Endothelial cell of umbilical vein (primary cell): ENCODE measurements at regions of chr5 and their contacts with region 1.

Region 1: DNA sequence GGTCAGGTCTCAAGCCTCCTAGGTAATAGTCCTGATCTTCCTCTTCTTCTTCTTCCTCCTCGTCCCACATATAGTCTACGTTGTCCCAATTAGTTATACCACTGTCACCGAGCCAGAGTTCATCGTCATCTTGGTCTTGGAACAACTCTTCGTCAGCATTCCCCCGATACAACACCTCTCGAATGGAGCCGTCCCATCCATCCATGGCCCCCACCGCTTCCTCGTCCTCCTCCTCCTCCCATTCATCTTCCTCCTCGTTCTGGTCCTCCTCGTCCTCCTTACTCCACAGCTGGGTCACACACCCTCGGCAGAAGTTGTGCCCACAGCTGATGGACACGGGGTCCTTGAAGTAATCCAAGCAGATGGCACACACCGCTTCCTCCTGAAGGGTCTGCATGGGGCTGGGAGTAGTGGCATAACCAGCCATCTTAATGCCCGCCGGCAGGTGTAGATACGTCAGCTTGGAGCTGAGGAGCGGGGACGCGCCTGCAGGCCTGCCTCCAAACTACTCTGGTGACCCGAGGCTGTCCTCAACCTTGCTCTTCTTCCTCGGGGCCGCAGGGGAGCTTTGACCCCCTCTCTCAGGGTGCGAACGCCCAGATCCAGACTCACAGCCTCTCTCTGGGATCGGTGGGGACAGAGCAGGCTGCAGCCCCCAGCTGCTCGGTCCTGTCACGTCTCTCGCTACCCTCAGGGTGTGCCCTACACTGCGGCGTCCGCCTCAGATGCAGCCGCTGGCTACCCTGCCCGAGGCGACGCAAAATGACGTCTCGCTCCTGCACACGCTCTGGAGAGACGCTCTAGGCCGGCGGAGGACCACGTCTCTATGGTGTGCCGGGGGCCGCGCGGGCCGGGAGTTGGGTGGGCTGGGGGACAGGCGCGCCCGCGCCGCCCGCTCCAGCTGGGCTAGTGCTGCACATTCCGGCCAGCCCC is at the start of gene TRIM52:
- DNase-seq: peak; percentile 92
- H3K4me3 ChIP-seq: peak within 1 kb of the TSS; percentile 23 to 83 (median 59)
- H3K27ac ChIP-seq: peak within 1 kb of the TSS; percentile 95
- H3K4me1 ChIP-seq: peaks cover 23% of the 10 kb centered on the region
- H3K27me3 ChIP-seq: no peaks in the 10 kb centered on the region
- CTCF ChIP-seq: no peak
- POLR2A ChIP-seq: peak; percentile 80
- total RNA-seq, gene TRIM52: 9.6 and 10.1 TPM in 2 replicates

Region 2: DNA sequence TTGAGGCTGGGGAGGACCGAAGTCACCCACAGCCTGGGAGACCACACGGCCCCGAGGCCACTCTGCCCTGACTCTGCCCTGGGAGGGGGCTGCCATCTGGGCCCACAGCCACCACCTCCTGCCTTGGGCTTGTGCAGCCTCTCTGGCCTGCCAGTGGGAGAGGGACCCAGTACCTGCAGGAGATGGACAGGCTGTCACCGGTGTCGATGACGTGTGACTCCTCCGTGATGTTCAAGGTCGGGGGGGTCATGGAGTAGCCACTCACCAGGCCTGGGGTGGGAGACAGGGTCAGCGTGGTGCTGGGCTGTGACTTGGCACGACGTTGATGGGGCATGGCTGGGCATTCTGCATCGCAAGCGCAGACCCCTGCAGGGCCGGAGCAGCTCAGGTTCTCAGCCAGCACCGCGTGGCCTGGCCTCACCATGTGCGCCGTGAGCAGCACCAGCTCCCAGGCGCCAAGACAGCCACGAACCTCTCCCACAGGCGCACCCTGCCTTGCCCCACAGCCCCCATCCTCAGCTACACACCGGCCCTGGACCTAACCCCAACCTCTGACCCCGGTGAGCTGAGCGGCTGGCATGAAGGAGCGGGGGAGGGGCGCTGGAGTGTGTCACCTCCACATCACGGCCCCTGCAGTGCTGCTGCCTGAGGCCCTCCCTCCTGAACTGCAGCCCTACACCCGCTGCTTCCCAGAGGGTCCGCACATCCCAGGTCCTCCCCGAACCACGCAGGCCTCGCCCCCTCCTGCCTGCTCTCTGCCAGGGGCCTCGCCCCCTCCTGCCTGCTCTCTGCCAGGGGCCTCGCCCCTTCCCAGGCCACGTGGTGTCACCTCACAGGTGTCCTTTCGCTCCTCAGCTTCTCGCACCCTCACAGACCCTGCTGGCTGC is 628.9 kb before region 1 on chr5:
- CTCF ChIA-PET with region 1: no interaction called
- POLR2A ChIA-PET with region 1: no interaction called
- dilution Hi-C with region 1: no loop called
- intact Hi-C with region 1: no loop called
- DNase-seq: no peak
- H3K4me3 ChIP-seq: no peak overlapping the region
- H3K27ac ChIP-seq: no peak overlapping the region
- H3K4me1 ChIP-seq: no peaks in the 10 kb centered on the region
- H3K27me3 ChIP-seq: no peaks in the 10 kb centered on the region
- CTCF ChIP-seq: no peak
- POLR2A ChIP-seq: no peak

Region 3: GRCh38 chr5:180802325-180803180 is 458.1 kb before region 1 on chr5 and contains the start of gene MGAT1:
- CTCF ChIA-PET with region 1: no interaction called
- POLR2A ChIA-PET with region 1: no interaction called
- dilution Hi-C with region 1: no loop called
- intact Hi-C with region 1: loop called (anchors 5 kb)
- DNase-seq: peak; percentile 87
- H3K4me3 ChIP-seq: peak within 1 kb of the TSS; percentile 46 to 98 (median 69)
- H3K27ac ChIP-seq: peak within 1 kb of the TSS; percentile 67
- H3K4me1 ChIP-seq: peaks cover 44% of the 10 kb centered on the region
- H3K27me3 ChIP-seq: no peaks in the 10 kb centered on the region
- CTCF ChIP-seq: no peak
- POLR2A ChIP-seq: peak; percentile 85
- total RNA-seq, gene MGAT1: 108 and 123 TPM in 2 replicates

Region 4: GRCh38 chr5:180860887-180861822 is 399.5 kb before region 1 on chr5 and contains the start of gene ZFP62:
- CTCF ChIA-PET with region 1: no interaction called
- POLR2A ChIA-PET with region 1: no interaction called
- dilution Hi-C with region 1: no loop called
- intact Hi-C with region 1: loop called (anchors 1 kb)
- DNase-seq: peak; percentile 90
- H3K4me3 ChIP-seq: peak within 1 kb of the TSS; percentile 44 to 79 (median 67)
- H3K27ac ChIP-seq: peak within 1 kb of the TSS; percentile 55
- H3K4me1 ChIP-seq: peaks cover 10% of the 10 kb centered on the region
- H3K27me3 ChIP-seq: no peaks in the 10 kb centered on the region
- CTCF ChIP-seq: no peak
- POLR2A ChIP-seq: peak; percentile 59
- total RNA-seq, gene ZFP62: 14.6 and 19.7 TPM in 2 replicates

Region 5: GRCh38 chr5:180935203-180935602 is 325.4 kb before region 1 on chr5:
- CTCF ChIA-PET with region 1: no interaction called
- POLR2A ChIA-PET with region 1: no interaction called
- dilution Hi-C with region 1: no loop called
- intact Hi-C with region 1: no loop called
- DNase-seq: no peak
- H3K4me3 ChIP-seq: no peak overlapping the region
- H3K27ac ChIP-seq: no peak overlapping the region
- H3K4me1 ChIP-seq: no peaks in the 10 kb centered on the region
- H3K27me3 ChIP-seq: no peaks in the 10 kb centered on the region
- CTCF ChIP-seq: no peak
- POLR2A ChIP-seq: no peak

Region 6: GRCh38 chr5:181114844-181115778 is 145.5 kb before region 1 on chr5:
- CTCF ChIA-PET with region 1: no interaction called
- POLR2A ChIA-PET with region 1: no interaction called
- dilution Hi-C with region 1: no loop called
- intact Hi-C with region 1: no loop called
- DNase-seq: peak; percentile 40
- H3K4me3 ChIP-seq: no peak overlapping the region
- H3K27ac ChIP-seq: no peak overlapping the region
- H3K4me1 ChIP-seq: peaks cover 4% of the 10 kb centered on the region
- H3K27me3 ChIP-seq: peaks cover 22 to 37% of the 10 kb centered on the region in 2 experiments
- CTCF ChIP-seq: no peak
- POLR2A ChIP-seq: no peak

Region 7: DNA sequence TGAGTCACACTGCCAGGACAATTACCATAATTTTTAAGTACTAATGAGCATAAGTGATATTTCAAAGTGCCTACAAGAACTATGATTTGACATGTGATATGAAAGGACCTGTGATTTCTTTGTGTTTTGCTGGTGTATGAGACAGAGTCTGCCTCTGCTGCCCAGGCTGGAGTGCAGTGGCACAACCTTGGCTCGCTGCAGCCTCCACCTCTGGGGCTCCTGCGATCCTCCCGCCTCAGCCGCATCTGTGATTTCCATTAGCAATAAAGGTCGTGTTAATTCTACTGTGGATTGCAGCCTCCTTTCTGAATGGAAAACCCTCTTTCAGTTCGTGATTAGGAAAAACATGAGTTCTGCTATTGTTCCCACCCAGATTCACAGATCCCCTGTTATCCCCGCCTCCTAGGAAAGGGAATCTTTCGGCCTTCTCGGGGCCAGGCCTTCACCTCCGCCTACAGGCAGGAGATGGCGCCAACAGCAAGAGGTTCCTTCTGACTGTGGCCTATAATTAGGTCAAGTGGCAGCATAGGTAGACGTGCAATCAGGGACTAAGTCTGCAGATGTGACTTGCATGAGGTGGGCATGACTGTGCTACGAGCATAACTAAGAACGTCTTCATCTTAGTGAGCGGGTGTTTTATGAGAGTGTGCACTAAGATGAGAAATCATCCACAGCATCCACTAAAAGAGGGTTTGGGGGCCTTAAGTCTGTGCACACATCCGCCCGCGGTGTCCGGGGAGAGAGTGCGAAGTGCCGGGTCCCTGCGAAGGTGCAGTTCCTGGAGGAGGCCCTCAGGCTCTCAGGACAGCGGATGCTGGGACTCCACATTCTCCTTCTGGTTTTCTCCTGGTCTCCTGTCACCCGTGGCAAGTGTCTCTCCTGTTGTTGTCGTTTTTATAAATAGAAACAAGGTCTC is 78.7 kb before region 1 on chr5:
- CTCF ChIA-PET with region 1: interaction called, 16 read pairs
- POLR2A ChIA-PET with region 1: interaction called, 4 read pairs
- dilution Hi-C with region 1: no loop called
- intact Hi-C with region 1: loop called (anchors 1 kb)
- DNase-seq: peak; percentile 77
- H3K4me3 ChIP-seq: no peak overlapping the region
- H3K27ac ChIP-seq: no peak overlapping the region
- H3K4me1 ChIP-seq: no peaks in the 10 kb centered on the region
- H3K27me3 ChIP-seq: peaks cover 3 to 4% of the 10 kb centered on the region in 2 experiments
- CTCF ChIP-seq: peak; percentile 76 to 79
- POLR2A ChIP-seq: no peak

Region 8: DNA sequence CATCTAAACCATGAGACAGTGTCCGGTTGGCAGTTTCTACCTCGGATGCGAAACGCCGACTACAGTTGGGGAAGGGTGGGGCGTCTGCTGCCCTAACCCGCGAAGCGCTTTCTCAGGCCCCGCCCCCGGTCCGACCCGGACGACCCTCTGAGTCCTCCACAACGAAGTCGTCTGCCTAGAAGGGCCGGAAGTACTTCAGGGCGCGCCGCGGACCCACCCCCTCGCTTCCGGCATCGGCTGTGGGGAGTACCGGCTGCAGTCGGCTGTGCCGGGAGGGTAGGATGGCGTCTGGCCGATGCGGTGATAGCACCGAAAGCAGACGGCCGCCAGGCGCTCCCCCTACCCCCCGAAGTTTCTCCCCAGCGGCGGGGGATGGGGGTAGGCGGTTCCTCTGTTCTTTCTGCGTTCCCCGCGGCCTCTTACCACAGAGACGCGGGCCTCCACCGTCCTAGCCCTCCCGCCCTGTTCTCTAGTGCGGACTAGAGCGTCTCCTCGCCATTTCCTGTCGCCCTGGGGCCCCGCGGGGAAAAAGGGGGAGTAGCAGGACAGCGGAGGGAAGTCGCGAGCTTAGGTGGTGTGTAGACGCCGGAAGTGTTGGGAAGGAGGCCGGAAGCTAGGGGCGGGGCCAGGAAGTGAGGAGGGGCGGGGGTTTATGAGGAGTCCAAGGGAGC is 37.5 kb before region 1 on chr5 and contains the start of gene TRIM41:
- CTCF ChIA-PET with region 1: no interaction called
- POLR2A ChIA-PET with region 1: interaction called, 11 read pairs
- dilution Hi-C with region 1: no loop called
- intact Hi-C with region 1: loop called (anchors 1 kb)
- DNase-seq: peak; percentile 98
- H3K4me3 ChIP-seq: peak within 1 kb of the TSS; percentile 21 to 76 (median 64)
- H3K27ac ChIP-seq: peak within 1 kb of the TSS; percentile 88
- H3K4me1 ChIP-seq: peaks cover 10% of the 10 kb centered on the region
- H3K27me3 ChIP-seq: no peaks in the 10 kb centered on the region
- CTCF ChIP-seq: peak; percentile 4 to 26
- POLR2A ChIP-seq: no peak
- total RNA-seq, gene TRIM41: 17.3 and 19.9 TPM in 2 replicates

Region 9: DNA sequence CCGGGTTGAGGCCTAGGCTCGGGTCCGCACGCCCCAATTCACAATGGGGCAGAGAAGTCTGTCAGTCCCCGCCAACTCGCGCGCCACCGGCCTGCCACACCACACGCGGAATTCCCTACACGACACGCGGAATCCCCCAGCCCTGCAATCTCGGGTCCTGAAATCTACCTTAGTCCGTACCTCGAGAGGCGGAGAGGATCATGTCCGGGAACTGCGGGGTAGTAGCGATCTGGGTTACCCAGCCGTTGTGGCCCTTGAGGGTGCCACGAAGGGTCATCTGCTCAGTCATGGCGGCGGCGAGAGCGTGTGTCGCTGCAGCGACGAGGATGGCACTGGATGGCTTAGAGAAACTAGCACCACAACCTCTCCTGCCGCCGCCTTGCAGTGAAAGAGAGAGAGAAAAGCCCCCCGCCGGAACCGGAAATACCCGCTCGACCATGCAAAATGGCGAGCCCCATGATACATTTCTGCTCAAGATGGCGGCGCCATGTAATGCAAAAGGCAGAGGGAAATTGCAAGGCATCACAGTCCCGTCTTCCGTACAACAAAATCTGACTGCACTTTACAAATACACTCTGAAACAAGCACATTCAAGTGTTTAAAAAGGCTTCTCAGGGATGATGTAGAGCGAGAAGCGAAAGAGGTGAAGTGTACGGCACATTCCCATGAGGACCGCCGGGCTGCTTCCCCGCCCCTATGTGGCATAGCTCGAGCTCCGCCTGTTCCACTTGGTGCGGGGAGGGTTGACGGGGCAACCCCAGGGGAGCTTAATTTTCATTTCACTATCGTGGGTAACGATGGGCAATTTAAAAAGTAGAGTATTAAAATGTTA is 16.9 kb before region 1 on chr5 and contains the start of gene RACK1:
- CTCF ChIA-PET with region 1: no interaction called
- POLR2A ChIA-PET with region 1: interaction called, 13 read pairs
- dilution Hi-C with region 1: no loop called
- intact Hi-C with region 1: loop called (anchors 1 kb)
- DNase-seq: peak; percentile 95
- H3K4me3 ChIP-seq: peak within 1 kb of the TSS; percentile 66 to 96 (median 89)
- H3K27ac ChIP-seq: peak within 1 kb of the TSS; percentile 91
- H3K4me1 ChIP-seq: peaks cover 42% of the 10 kb centered on the region
- H3K27me3 ChIP-seq: no peaks in the 10 kb centered on the region
- CTCF ChIP-seq: no peak
- POLR2A ChIP-seq: peak; percentile 93
- total RNA-seq, gene RACK1: 1,910 and 2,029 TPM in 2 replicates